ENCODE measurements at regions of chr1 and their contacts with region 1.

Region 1: GRCh38 chr1:9615316-9616063 is 26.8 kb downstream of the TMEM201 start:
- DNase-seq: peak; percentile 85
- ATAC-seq: peak; percentile 96
- H3K4me3 Mint-ChIP-seq: no peak overlapping the region
- H3K27ac Mint-ChIP-seq: 0 out of 2 replicates have a peak overlapping the region, but pooled peaks have one; percentile 60
- H3K4me1 Mint-ChIP-seq: peaks cover 2% of the 10 kb centered on the region; the same call in 1 of the 2 replicates
- H3K27me3 Mint-ChIP-seq: no peaks in the 10 kb centered on the region
- CTCF ChIP-seq: peak; percentile 52

Region 2: GRCh38 chr1:9360371-9361064 is 255.0 kb before region 1 on chr1:
- CTCF ChIA-PET with region 1: no interaction called
- POLR2A ChIA-PET with region 1: no interaction called
- DNase-seq: no peak
- ATAC-seq: no peak
- H3K4me3 Mint-ChIP-seq: no peak overlapping the region
- H3K27ac Mint-ChIP-seq: peak overlapping the region; percentile 49; the same call in 1 of the 2 replicates
- H3K4me1 Mint-ChIP-seq: no peaks in the 10 kb centered on the region
- H3K27me3 Mint-ChIP-seq: no peaks in the 10 kb centered on the region
- CTCF ChIP-seq: no peak

Region 3: DNA sequence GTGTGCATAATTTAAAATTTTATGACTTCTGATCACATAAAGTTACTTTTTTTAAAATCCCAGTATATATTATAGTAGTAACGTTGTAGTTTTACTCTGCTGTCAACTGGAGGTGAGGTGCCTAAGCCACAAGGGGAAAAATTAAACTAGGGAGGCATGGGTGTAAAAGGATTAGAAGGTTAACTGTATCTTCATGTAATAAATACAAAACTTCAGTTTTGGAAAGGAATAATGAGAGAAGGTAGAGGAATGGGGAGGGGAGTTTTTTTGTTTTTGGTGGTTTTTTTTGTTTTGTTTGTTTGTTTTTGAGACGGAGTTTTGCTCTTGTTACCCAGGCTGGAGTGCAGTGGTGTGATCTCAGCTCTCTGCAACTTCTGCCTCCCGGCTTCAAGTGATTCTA is 70.6 kb before region 1 on chr1:
- CTCF ChIA-PET with region 1: interaction called, 11 read pairs
- POLR2A ChIA-PET with region 1: no interaction called
- DNase-seq: no peak
- ATAC-seq: no peak
- H3K4me3 Mint-ChIP-seq: no peak overlapping the region
- H3K27ac Mint-ChIP-seq: peak overlapping the region; percentile 7; the same call in 1 of the 2 replicates
- H3K4me1 Mint-ChIP-seq: peaks cover 21% of the 10 kb centered on the region
- H3K27me3 Mint-ChIP-seq: no peaks in the 10 kb centered on the region
- CTCF ChIP-seq: no peak

Region 4: GRCh38 chr1:9596415-9597123 is 18.9 kb before region 1 on chr1:
- CTCF ChIA-PET with region 1: interaction called, 93 read pairs
- POLR2A ChIA-PET with region 1: no interaction called
- DNase-seq: no peak
- ATAC-seq: no peak
- H3K4me3 Mint-ChIP-seq: no peak overlapping the region
- H3K27ac Mint-ChIP-seq: no peak overlapping the region; the same call in 1 of the 2 replicates
- H3K4me1 Mint-ChIP-seq: peaks cover 22% of the 10 kb centered on the region
- H3K27me3 Mint-ChIP-seq: no peaks in the 10 kb centered on the region
- CTCF ChIP-seq: no peak

Region 5: DNA sequence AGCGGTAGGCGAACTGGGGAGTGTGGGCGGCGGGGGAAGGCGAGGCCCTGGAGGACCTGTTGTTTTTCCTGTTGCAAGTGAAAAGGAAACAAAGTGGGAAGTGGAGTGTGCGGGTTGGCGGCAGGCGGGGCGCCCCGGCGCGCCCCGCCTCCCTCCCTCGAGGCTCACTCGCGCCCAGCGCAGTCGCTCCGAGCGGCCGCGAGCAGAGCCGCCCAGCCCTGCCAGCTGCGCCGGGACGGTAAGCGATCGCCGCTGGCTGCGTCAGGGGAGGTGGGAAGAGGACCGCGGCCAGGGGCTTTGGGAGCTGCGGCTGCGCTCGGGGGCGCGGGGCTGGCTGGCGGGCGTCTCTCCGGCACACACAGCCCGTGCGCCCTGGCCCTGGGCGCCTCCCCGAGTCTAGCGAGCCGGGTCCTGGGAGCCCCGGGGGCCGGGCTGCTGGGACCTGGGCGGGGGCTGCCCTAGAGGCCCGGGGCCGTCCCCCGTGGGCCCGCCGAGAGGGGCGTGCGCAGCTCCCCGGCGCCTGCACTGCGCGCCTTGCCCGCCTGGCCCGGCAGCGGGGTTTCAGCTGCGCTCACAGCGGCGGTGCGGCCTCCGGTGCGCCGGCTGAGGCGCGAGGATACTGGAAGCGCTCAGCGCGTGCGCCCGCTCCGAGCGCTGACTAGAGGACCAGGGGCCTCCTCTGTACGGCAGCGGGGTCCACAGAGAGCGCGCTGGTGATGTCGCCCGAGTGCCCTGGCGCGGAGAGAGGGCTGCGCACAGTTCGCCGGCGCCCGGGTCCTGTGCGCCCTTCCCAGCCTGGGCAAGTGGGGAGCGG is 36.3 kb after region 1 on chr1 and contains the start of gene PIK3CD:
- CTCF ChIA-PET with region 1: interaction called, 15 read pairs
- POLR2A ChIA-PET with region 1: no interaction called
- DNase-seq: peak; percentile 70
- ATAC-seq: peak; percentile 83
- H3K4me3 Mint-ChIP-seq: peak within 1 kb of the TSS; percentile 72
- H3K27ac Mint-ChIP-seq: no peak within 1 kb of the TSS
- H3K4me1 Mint-ChIP-seq: peaks cover 4% of the 10 kb centered on the region; the same call in 1 of the 2 replicates
- H3K27me3 Mint-ChIP-seq: peaks cover 58% of the 10 kb centered on the region
- CTCF ChIP-seq: no peak
- total RNA-seq, gene PIK3CD: 17.9 to 23.1 TPM (median 20.2 TPM) in 3 replicates

Region 6: GRCh38 chr1:9717193-9718005 is 101.9 kb after region 1 on chr1:
- CTCF ChIA-PET with region 1: interaction called, 60 read pairs
- POLR2A ChIA-PET with region 1: interaction called, 4 read pairs
- DNase-seq: peak; percentile 62
- ATAC-seq: peak; percentile 15
- H3K4me3 Mint-ChIP-seq: peak overlapping the region; percentile 41; the same call in 1 of the 2 replicates
- H3K27ac Mint-ChIP-seq: peak overlapping the region; percentile 96
- H3K4me1 Mint-ChIP-seq: peaks cover 43% of the 10 kb centered on the region
- H3K27me3 Mint-ChIP-seq: no peaks in the 10 kb centered on the region; the same call in 1 of the 2 replicates
- CTCF ChIP-seq: no peak

Measured in WTC11 (cell line).